Posterior vena cava (tissue), 2 donors: ENCODE measurements at regions of chr13 and their contacts with region 1.

Region 1: GRCh38 chr13:94560116-94560515 is 35.8 kb downstream of the TGDS start:
- DNase-seq: no peak

Region 2: DNA sequence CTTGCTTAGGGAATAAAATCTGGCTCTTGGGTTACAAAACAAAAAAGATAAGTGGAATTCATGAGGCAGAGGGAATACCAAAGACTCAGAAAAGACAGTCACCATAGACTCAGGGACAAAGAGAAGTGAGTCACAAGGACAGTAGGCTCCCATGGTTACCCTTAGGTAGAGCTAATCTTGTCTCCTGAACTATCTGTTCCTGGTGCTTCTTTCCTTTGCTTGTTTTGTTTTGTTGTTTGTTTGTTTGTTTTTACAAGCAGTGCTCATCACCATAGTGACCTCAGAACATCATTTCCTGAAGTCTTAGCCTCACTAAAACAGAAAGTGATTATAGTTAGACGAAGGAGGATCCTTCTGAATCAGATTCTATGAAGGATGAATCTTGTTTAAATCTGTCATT is 294.6 kb after region 1 on chr13:
- intact Hi-C with region 1: loop called in 1 of 2 experiments (anchors 5 kb)
- DNase-seq: no peak